T-cell (primary cell): ENCODE measurements at regions of chr6 and their contacts with region 1.

Region 1: GRCh38 chr6:34922177-34922663 is 33.2 kb downstream of the ANKS1A start:
- DNase-seq: no peak
- ATAC-seq: peak in 1 of 4 experiments; percentile 41
- H3K4me3 ChIP-seq: no peak overlapping the region
- H3K4me3 Mint-ChIP-seq: no peak overlapping the region
- H3K27ac ChIP-seq: no peak overlapping the region
- H3K27ac Mint-ChIP-seq: no peak overlapping the region
- H3K4me1 ChIP-seq: no peaks in the 10 kb centered on the region
- H3K4me1 Mint-ChIP-seq: peaks cover 4 to 11% (median 10%) of the 10 kb centered on the region in 3 donors
- H3K27me3 ChIP-seq: no peaks in the 10 kb centered on the region
- H3K27me3 Mint-ChIP-seq: no peaks in the 10 kb centered on the region

Region 2: DNA sequence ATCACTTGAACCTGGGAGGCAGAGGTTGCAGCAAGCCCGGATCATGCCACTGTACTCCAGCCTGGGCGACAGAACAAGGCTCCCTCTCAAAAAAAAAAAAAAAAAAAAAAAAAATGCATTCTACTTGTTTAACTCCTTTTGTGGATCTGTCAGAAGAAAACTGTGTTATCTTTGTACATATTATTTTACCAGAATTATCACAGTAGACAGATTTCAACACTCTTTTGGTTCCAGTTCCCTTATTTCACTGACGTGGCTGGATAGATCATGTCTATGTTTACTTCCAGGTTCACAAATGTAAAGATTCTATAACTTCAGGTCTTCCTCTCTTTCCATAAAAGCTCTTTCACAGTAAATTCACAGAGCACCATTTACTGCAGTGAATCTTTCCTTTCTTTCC is 548.2 kb before region 1 on chr6:
- CTCF ChIA-PET with region 1: no interaction called
- POLR2A ChIA-PET with region 1: no interaction called
- DNase-seq: no peak
- ATAC-seq: no peak
- H3K4me3 ChIP-seq: no peak overlapping the region
- H3K4me3 Mint-ChIP-seq: no peak overlapping the region
- H3K27ac ChIP-seq: no peak overlapping the region
- H3K27ac Mint-ChIP-seq: no peak overlapping the region
- H3K4me1 ChIP-seq: peaks cover 0 to 2% of the 10 kb centered on the region in 2 experiments
- H3K4me1 Mint-ChIP-seq: peaks cover 27 to 36% (median 28%) of the 10 kb centered on the region in 3 donors
- H3K27me3 ChIP-seq: no peaks in the 10 kb centered on the region
- H3K27me3 Mint-ChIP-seq: no peaks in the 10 kb centered on the region

Region 3: DNA sequence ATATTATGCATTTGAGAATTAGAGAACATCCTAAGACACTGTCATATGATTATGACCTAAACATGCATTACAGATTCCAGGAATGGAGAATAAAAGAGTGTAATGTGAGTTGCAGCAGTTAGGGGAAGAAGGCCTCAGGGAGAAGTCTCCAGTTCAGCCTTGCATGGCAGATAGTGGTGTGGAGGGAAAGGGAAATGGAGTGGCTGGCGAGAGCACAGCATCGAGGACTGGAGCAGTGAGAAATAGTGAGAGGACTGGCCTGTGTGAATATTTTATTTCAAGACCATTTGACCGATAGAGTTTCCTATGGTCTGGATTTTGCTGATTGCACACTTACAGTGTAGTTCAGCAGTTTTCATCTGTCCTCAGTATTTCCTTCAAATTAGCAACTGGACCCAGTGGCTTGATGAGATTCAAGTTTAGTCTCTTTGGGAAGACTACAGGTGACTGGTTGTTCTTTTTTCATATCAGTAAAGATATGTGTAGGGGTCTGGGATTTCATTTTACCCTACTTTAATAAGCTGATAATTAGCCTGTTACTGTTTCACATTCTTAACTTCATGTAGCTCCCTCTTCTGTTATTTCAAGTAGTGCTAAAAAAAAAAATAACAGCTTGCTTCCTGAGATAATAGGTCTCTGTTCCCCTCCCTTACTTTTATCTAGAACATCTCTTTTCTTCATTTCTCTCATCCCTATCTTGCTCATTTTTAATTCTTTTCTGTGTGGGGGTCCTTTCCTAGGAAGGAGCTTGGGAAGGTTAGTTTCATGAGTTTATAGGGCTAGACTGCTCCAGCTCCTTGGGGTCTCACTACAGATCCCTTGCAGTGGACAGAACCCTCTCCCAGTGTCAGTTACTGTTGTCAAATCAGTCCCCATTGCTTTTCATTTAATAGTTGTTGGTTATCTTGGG is 102.4 kb before region 1 on chr6:
- CTCF ChIA-PET with region 1: no interaction called
- POLR2A ChIA-PET with region 1: no interaction called
- DNase-seq: no peak
- ATAC-seq: no peak
- H3K4me3 ChIP-seq: no peak overlapping the region
- H3K4me3 Mint-ChIP-seq: no peak overlapping the region
- H3K27ac ChIP-seq: no peak overlapping the region
- H3K27ac Mint-ChIP-seq: peak overlapping the region in 1 of 2 donors; percentile 16
- H3K4me1 ChIP-seq: no peaks in the 10 kb centered on the region
- H3K4me1 Mint-ChIP-seq: peaks cover 8 to 14% (median 13%) of the 10 kb centered on the region in 3 donors
- H3K27me3 ChIP-seq: no peaks in the 10 kb centered on the region
- H3K27me3 Mint-ChIP-seq: no peaks in the 10 kb centered on the region

Region 4: DNA sequence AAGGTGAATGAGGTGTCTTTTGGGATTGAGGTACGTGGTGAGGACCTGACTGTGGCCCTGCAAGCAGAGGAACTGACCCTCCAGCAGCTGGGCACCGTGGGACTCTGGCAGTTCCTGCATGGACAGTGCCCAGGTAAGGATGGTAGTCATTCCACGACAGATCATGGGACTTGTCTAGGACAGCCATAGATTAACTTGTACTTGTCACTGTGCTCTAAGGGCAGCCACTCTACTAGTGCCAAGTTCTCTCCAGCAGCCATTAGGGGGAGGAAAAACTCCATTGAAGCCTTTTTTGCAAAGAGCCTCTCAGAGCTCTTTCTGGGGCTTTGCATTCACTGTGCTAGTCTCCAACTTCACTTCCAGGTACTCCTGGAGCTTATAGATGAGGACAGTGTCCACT is 54.7 kb before region 1 on chr6:
- CTCF ChIA-PET with region 1: no interaction called
- POLR2A ChIA-PET with region 1: interaction called in 1 of 2 experiments, 10 read pairs
- DNase-seq: no peak
- ATAC-seq: no peak
- H3K4me3 ChIP-seq: no peak overlapping the region
- H3K4me3 Mint-ChIP-seq: no peak overlapping the region
- H3K27ac ChIP-seq: no peak overlapping the region
- H3K27ac Mint-ChIP-seq: no peak overlapping the region
- H3K4me1 ChIP-seq: no peaks in the 10 kb centered on the region
- H3K4me1 Mint-ChIP-seq: no peaks in the 10 kb centered on the region
- H3K27me3 ChIP-seq: no peaks in the 10 kb centered on the region
- H3K27me3 Mint-ChIP-seq: no peaks in the 10 kb centered on the region

Region 5: GRCh38 chr6:35034411-35035191 is 112.4 kb after region 1 on chr6:
- CTCF ChIA-PET with region 1: no interaction called
- POLR2A ChIA-PET with region 1: no interaction called
- DNase-seq: no peak
- ATAC-seq: no peak
- H3K4me3 ChIP-seq: no peak overlapping the region
- H3K4me3 Mint-ChIP-seq: no peak overlapping the region
- H3K27ac ChIP-seq: no peak overlapping the region
- H3K27ac Mint-ChIP-seq: no peak overlapping the region
- H3K4me1 ChIP-seq: no peaks in the 10 kb centered on the region
- H3K4me1 Mint-ChIP-seq: no peaks in the 10 kb centered on the region
- H3K27me3 ChIP-seq: no peaks in the 10 kb centered on the region
- H3K27me3 Mint-ChIP-seq: no peaks in the 10 kb centered on the region